ENCODE measurements at regions of chr9 and their contacts with region 1.

Region 1: DNA sequence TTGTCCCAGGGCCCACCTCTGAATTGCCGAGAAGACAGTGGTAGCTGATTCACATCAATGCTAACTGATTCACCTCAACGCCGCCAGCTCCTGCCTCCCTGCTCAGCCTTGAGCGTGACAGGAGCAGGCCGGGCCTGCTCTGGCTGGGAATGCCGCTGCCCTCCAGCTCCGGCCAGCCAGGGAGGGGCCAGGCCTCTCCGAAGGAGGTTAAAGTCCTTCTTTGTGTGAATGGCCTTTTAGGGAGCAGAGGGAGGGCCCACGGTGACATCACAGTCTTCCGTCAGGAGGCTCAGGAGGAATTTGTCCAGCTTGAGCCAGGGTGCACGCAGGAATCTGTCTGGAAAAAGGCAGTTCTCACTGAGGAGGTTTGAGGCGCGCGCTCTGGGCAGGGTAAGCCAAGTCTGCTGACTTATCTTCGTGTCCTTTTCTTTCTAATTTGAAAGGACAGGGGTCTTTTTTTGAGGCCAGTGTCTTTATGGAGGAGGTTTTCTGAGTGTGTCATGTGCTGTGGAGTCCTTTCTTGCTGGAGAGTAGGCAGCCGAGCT is 82.7 kb downstream of the C9orf152 start:
- ATAC-seq: peak in 7 of 8 experiments; percentile 84 to 98 (median 97)
- H3K4me3 ChIP-seq: peak overlapping the region in 3 of 5 donors; percentile 19 to 26 (median 24)
- H3K27ac ChIP-seq: peak overlapping the region; percentile 45 to 79
- H3K4me1 ChIP-seq: peaks cover 23 to 35% of the 10 kb centered on the region in 2 donors

Region 2: DNA sequence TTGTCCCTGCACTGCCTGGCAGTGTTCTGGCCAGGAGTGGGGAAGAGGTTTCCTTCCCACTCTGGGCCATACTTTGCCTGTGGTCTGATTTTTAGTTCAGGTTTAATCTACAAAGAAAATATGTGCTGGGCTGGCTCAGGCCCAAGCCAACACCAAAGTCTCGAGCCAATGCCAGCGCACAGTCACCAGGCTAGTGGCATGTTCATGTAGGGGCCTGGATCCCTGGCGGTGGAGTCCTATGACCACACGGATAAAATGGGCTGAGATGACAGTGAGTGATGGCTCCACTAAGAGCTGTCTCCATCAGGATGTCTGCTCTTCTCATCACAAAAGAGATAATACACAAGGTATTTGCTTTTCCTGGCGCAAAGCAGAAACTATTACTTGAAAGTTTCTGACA is 534.3 kb before region 1 on chr9:
- in situ Hi-C with region 1: loop called in 1 of 9 experiments (anchors 25 kb)
- ATAC-seq: no peak
- H3K4me3 ChIP-seq: no peak overlapping the region
- H3K27ac ChIP-seq: no peak overlapping the region
- H3K4me1 ChIP-seq: no peaks in the 10 kb centered on the region

Measured in motor neuron (in vitro differentiated cells).